PC-9 (cell line): ENCODE measurements at regions of chr11 and their contacts with region 1.

Region 1: GRCh38 chr11:62169091-62169847 is 20.7 kb upstream of the SCGB1D1 start:
- DNase-seq: no peak
- H3K4me3 ChIP-seq: no peak overlapping the region
- H3K27ac ChIP-seq: no peak overlapping the region
- H3K4me1 ChIP-seq: no peaks in the 10 kb centered on the region
- H3K27me3 ChIP-seq: peaks cover 99% of the 10 kb centered on the region
- CTCF ChIP-seq: no peak

Region 2: GRCh38 chr11:61923166-61924063 is 245.9 kb before region 1 on chr11:
- CTCF ChIA-PET with region 1: no interaction called
- POLR2A ChIA-PET with region 1: no interaction called
- intact Hi-C with region 1: no loop called
- DNase-seq: peak in 1 of 2 experiments; percentile 50
- H3K4me3 ChIP-seq: no peak overlapping the region
- H3K27ac ChIP-seq: no peak overlapping the region
- H3K4me1 ChIP-seq: 0 out of 2 replicates have a peak, but pooled peaks cover 4% of the 10 kb centered on the region
- H3K27me3 ChIP-seq: peaks cover 16% of the 10 kb centered on the region
- CTCF ChIP-seq: no peak

Region 3: DNA sequence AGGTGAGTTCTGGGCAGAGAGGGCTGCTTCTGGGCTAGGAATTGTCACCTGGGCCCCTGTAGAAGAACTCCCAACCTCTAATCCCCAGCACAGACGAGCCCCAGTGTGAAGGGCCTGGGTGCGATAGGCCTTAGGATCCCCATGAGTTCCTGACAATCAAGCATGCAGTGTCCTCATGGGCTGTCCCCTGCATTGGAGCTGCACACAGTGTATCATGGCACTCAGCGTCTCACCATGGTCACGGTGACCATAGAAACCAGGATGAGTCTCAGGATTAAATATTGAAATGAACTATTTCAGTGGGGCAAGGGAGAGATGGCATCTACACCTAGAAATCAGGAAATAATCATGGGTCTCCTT is 39.5 kb after region 1 on chr11:
- CTCF ChIA-PET with region 1: no interaction called
- POLR2A ChIA-PET with region 1: no interaction called
- intact Hi-C with region 1: loop called (anchors 1 kb)
- DNase-seq: no peak
- H3K4me3 ChIP-seq: no peak overlapping the region
- H3K27ac ChIP-seq: no peak overlapping the region
- H3K4me1 ChIP-seq: no peaks in the 10 kb centered on the region
- H3K27me3 ChIP-seq: peaks cover 84% of the 10 kb centered on the region
- CTCF ChIP-seq: no peak

Region 4: GRCh38 chr11:62315431-62315830 is 146.2 kb after region 1 on chr11:
- CTCF ChIA-PET with region 1: no interaction called
- POLR2A ChIA-PET with region 1: no interaction called
- intact Hi-C with region 1: loop called (anchors 1 kb)
- DNase-seq: no peak
- H3K4me3 ChIP-seq: no peak overlapping the region
- H3K27ac ChIP-seq: no peak overlapping the region
- H3K4me1 ChIP-seq: no peaks in the 10 kb centered on the region
- H3K27me3 ChIP-seq: peaks cover 82% of the 10 kb centered on the region
- CTCF ChIP-seq: no peak

Region 5: GRCh38 chr11:62372871-62373270 is 203.6 kb after region 1 on chr11:
- CTCF ChIA-PET with region 1: no interaction called
- POLR2A ChIA-PET with region 1: no interaction called
- intact Hi-C with region 1: loop called (anchors 1 kb)
- DNase-seq: no peak
- H3K4me3 ChIP-seq: no peak overlapping the region
- H3K27ac ChIP-seq: no peak overlapping the region
- H3K4me1 ChIP-seq: no peaks in the 10 kb centered on the region
- H3K27me3 ChIP-seq: no peaks in the 10 kb centered on the region
- CTCF ChIP-seq: no peak

Region 6: DNA sequence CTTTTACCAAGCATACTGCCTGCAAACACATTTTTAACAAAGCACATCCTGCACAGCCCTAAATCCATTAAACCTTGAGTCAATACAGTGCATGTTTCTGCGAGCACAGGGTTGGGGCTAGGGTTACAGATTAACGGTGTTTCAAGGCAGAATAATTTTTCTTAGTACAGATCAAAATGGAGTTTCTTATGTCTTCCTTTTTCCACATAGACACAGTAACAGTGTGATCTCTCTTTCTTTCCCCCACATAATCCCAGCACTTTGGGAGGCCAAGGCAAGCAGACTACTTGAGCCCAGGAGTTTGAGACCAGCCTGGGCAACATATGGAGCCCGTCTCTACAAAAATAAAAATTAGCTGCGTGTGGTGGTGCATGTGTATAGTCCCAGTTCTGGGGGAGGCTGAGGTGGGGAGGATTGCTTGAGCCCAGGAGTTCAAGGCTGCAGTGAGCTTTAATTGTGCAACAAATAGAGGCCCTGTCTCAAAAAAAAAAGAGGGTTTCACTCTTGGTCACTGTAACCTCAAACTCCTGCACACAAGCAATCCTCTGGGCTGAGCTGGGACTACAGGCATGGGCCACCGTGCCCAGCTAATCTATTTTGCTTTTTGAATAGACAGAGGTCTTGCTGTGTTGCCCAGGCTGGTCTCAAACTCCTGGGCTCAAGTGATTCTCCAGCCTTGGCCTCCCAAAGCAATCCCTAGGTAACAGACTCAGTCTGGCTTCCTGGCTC is 691.7 kb after region 1 on chr11:
- CTCF ChIA-PET with region 1: no interaction called
- POLR2A ChIA-PET with region 1: no interaction called
- intact Hi-C with region 1: loop called (anchors 2 kb)
- DNase-seq: no peak
- H3K4me3 ChIP-seq: no peak overlapping the region
- H3K27ac ChIP-seq: no peak overlapping the region
- H3K4me1 ChIP-seq: peaks cover 9% of the 10 kb centered on the region
- H3K27me3 ChIP-seq: no peaks in the 10 kb centered on the region
- CTCF ChIP-seq: no peak